ENCODE measurements at regions of chr16 and their contacts with region 1.

Region 1: GRCh38 chr16:2867987-2868789 is 10.2 kb upstream of the PRSS22 start:
- DNase-seq: peak; percentile 95
- H3K4me3 Mint-ChIP-seq: peak overlapping the region; percentile 80
- H3K27ac Mint-ChIP-seq: peak overlapping the region; percentile 78
- H3K4me1 Mint-ChIP-seq: peaks cover 19% of the 10 kb centered on the region
- H3K27me3 Mint-ChIP-seq: peaks cover 45% of the 10 kb centered on the region

Region 2: GRCh38 chr16:2838928-2839327 is 29.3 kb before region 1 on chr16:
- CTCF ChIA-PET with region 1: interaction called, 95 read pairs
- DNase-seq: peak; percentile 67
- H3K4me3 Mint-ChIP-seq: no peak overlapping the region
- H3K27ac Mint-ChIP-seq: no peak overlapping the region
- H3K4me1 Mint-ChIP-seq: peaks cover 28% of the 10 kb centered on the region
- H3K27me3 Mint-ChIP-seq: peaks cover 35% of the 10 kb centered on the region

Region 3: DNA sequence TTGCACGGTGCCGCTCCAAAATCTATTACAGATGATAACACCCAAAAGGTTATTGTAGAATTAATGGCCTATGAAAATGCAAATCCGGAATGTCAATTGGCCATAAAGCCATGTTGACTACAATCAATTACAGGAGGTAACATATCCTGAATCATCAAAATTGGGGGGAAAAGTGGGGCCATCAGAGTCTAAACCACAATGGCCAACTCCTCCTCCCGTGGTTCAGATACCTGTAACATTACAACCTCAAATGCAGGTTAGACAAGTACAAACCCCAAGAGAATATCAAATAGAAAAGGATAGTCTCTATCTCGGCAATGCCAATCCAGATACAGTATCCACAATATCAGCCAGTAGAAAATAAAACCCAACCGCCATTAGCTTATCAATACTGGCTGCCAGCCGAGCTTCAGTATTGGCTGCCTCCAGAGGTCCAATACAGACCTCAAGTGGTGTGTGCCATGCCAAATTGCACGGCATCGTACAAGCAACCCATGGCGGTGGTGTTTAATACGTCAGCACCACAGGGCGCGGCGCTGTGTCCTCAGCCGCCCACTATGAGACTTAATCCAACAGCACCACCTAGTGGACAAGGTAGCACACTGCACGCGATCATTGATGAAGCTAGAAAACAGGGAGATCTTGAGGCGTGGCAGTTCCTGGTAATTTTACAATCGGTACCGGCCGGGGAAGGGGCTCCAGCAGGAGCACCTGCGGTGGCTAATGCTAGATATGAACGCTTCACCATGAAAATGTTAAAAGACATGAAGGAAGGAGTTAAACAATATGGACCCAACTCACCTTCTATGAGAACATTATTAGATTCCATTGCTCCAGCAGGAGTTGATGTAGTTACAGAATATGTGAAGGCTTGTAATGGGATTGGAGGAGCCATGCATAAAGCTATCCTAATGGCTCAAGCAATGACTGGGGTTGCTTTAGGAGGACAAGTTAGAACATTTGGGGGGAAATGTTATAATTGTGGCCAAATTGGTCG is 58.8 kb after region 1 on chr16:
- CTCF ChIA-PET with region 1: interaction called, 10 read pairs
- DNase-seq: peak; percentile 93
- H3K4me3 Mint-ChIP-seq: no peak overlapping the region
- H3K27ac Mint-ChIP-seq: peak overlapping the region; percentile 8
- H3K4me1 Mint-ChIP-seq: peaks cover 12% of the 10 kb centered on the region
- H3K27me3 Mint-ChIP-seq: no peaks in the 10 kb centered on the region